Activated naive CD8-positive, alpha-beta T cell treated with anti-CD3 and anti-CD28 coated beads, Interleukin-2, amount 10 ng/mL, durations not matched to agents 7 days and 5 days (primary cell): ENCODE measurements at regions of chr12 and their contacts with region 1.

Region 1: GRCh38 chr12:27523642-27524493 is at the start of gene PPFIBP1:
- DNase-seq: peak; percentile 88
- ATAC-seq: peak; percentile 95
- H3K4me3 Mint-ChIP-seq: peak within 1 kb of the TSS; percentile 97
- H3K27ac Mint-ChIP-seq: peak within 1 kb of the TSS; percentile 95
- H3K4me1 Mint-ChIP-seq: peaks cover 26% of the 10 kb centered on the region
- H3K27me3 Mint-ChIP-seq: peaks cover 19% of the 10 kb centered on the region
- total RNA-seq, gene PPFIBP1: 14.6 to 18.2 TPM

Region 2: GRCh38 chr12:27534060-27534764 is 10.3 kb after region 1 on chr12:
- POLR2A ChIA-PET with region 1: interaction called, 12 read pairs
- DNase-seq: no peak
- ATAC-seq: peak; percentile 89
- H3K4me3 Mint-ChIP-seq: peak overlapping the region; percentile 73
- H3K27ac Mint-ChIP-seq: peak overlapping the region; percentile 57
- H3K4me1 Mint-ChIP-seq: peaks cover 41% of the 10 kb centered on the region
- H3K27me3 Mint-ChIP-seq: peaks cover 8% of the 10 kb centered on the region

Region 3: GRCh38 chr12:27549801-27550652 is 26.2 kb after region 1 on chr12:
- POLR2A ChIA-PET with region 1: no interaction called
- DNase-seq: no peak
- ATAC-seq: no peak
- H3K4me3 Mint-ChIP-seq: no peak overlapping the region
- H3K27ac Mint-ChIP-seq: no peak overlapping the region
- H3K4me1 Mint-ChIP-seq: peaks cover 6% of the 10 kb centered on the region
- H3K27me3 Mint-ChIP-seq: peaks cover 4% of the 10 kb centered on the region